Activated naive CD4-positive, alpha-beta T cell treated with anti-CD3 and anti-CD28 coated beads, Interleukin-2, amount 10 ng/mL, durations not matched to agents 7 days and 5 days (primary cell): ENCODE measurements at regions of chr1 and their contacts with region 1.

Region 1: DNA sequence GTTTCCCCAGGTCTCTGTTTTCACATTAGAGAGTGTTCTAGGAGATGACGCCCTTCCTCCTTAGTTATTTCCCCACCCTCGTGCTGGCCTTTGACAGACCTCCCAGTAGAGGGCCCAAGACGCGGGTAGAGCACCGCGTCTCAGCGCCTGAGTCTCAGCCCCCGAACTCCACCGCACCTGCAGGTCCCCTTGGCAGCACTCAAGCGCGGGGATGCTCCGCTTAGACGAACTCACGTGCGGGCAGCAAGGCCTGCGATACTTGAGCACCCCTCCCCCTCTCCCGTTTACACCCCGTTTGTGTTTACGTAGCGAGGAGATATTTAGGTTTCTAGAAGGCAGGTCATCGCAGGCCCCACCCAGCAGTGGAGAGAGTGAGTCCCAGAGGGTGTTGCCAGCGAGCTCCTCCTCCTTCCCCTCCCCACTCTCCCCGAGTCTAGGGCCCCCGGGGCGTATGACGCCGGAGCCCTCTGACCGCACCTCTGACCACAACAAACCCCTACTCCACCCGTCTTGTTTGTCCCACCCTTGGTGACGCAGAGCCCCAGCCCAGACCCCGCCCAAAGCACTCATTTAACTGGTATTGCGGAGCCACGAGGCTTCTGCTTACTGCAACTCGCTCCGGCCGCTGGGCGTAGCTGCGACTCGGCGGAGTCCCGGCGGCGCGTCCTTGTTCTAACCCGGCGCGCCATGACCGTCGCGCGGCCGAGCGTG is at the start of gene CD55:
- DNase-seq: peak; percentile 100
- H3K4me3 Mint-ChIP-seq: peak within 1 kb of the TSS; percentile 96
- H3K27ac Mint-ChIP-seq: peak within 1 kb of the TSS; percentile 100
- H3K4me1 Mint-ChIP-seq: peaks cover 46% of the 10 kb centered on the region
- H3K27me3 Mint-ChIP-seq: peaks cover 7% of the 10 kb centered on the region

Region 2: DNA sequence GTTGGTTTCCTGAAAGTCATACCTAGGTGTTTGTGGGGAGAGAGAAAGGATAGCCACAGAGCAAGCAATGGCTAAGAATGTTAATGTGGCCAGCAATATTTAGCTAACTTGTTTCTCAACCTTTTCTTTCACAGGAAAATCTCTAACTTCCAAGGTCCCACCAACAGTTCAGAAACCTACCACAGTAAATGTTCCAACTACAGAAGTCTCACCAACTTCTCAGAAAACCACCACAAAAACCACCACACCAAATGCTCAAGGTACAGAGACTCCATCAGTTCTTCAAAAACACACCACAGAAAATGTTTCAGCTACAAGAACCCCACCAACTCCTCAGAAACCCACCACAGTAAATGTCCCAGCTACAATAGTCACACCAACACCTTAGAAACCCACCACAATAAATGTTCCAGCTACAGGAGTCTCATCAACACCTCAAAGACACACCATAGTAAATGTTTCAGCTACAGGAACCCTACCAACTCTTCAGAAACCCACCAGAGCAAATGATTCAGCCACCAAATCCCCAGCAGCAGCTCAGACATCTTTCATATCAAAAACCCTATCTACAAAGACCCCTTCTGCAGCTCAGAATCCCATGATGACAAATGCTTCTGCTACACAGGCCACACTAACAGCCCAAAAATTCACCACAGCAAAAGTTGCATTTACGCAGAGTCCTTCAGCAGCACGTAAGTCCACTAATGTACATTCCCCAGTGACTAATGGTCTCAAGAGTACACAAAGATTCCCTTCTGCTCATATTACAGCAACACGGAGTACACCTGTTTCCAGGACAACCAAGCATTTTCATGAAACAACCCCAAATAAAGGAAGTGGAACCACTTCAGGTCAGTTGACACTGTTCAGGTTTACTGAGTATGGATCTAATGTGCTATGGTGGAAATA is 15.6 kb after region 1 on chr1:
- CTCF ChIA-PET with region 1: interaction called, 16 read pairs
- DNase-seq: peak; percentile 67
- H3K4me3 Mint-ChIP-seq: peak overlapping the region; percentile 40
- H3K27ac Mint-ChIP-seq: peak overlapping the region; percentile 95
- H3K4me1 Mint-ChIP-seq: peaks cover 82% of the 10 kb centered on the region
- H3K27me3 Mint-ChIP-seq: no peaks in the 10 kb centered on the region

Region 3: DNA sequence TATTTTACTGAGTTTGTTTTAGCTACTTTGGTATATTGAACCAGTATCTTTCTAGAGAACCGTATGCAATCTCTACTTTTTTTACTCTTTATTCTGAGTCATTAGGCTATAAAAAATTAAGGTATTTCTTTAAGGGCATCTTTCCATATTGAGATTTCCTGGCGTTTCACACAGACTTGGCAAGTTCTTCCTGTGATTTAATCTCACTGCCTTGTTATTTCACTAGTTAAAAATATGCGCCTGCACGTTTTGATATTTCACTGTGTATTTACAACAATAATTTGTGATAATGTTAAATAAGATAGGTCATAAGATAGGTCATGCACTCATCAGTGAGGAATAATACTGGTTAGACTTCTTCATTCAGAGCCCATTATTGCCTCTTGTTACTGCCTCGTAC is 307.5 kb after region 1 on chr1:
- CTCF ChIA-PET with region 1: no interaction called
- DNase-seq: no peak
- H3K4me3 Mint-ChIP-seq: no peak overlapping the region
- H3K27ac Mint-ChIP-seq: no peak overlapping the region
- H3K4me1 Mint-ChIP-seq: no peaks in the 10 kb centered on the region
- H3K27me3 Mint-ChIP-seq: peaks cover 3% of the 10 kb centered on the region